ENCODE measurements at regions of chr15 and their contacts with region 1.

Region 1: GRCh38 chr15:23039151-23039916 is at the start of gene TUBGCP5:
- DNase-seq: peak; percentile 99 to 100
- ATAC-seq: peak; percentile 100
- H3K4me3 ChIP-seq: peak within 1 kb of the TSS; percentile 20 to 92
- H3K27ac ChIP-seq: peak within 1 kb of the TSS in 1 of 2 donors; percentile 59
- H3K4me1 ChIP-seq: no peaks in the 10 kb centered on the region
- H3K27me3 ChIP-seq: no peaks in the 10 kb centered on the region
- total RNA-seq, gene TUBGCP5: 13.7 to 19.8 TPM

Region 2: GRCh38 chr15:22786868-22787698 is 252.3 kb before region 1 on chr15:
- intact Hi-C with region 1: loop called in 1 of 2 experiments (anchors 10 kb)
- DNase-seq: peak in 1 of 2 donors; percentile 77
- ATAC-seq: no peak
- H3K4me3 ChIP-seq: peak overlapping the region; percentile 75
- H3K27ac ChIP-seq: peak overlapping the region in 1 of 2 donors; percentile 14
- H3K4me1 ChIP-seq: no peaks in the 10 kb centered on the region
- H3K27me3 ChIP-seq: no peaks in the 10 kb centered on the region

Region 3: DNA sequence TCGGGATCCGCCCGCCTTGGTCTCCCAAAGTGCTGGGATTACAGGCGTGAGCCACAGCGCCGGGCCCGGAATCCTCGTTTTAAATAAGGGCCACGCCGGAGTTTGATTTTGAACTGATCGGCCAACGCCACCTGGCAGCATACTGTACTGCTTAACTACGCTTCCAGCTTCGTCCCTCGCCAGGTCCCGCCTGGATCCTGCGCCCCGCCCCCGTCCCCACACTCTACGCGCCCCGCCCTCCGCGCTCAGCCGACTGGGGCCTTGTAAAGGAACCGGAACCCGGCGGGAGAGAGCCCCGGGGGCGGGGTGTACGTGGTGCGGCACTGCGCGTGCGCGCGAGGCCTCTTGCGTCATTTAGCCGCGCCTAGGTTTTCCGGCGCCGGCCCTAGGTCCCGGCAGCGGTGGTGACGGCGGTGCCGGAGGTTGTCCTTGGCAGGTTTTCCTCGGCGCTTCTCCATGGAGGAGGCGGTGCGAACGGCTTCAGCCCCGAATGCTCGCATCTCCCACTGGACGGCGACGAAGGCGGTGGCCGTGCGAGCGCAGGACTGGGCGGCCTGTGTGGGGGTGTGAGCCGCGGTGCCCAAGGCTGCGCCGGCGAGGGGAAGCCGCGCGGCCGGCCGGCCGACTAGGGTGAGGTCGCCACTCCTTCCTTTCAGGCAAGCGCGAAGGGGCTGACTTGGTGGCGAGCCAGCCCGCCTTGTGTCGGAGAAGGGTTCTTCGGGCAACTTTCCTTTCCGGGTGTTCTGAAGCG is 200.9 kb before region 1 on chr15 and contains the start of gene NIPA2:
- intact Hi-C with region 1: loop called in 1 of 2 experiments (anchors 2 kb)
- DNase-seq: peak; percentile 99 to 100
- ATAC-seq: peak; percentile 99
- H3K4me3 ChIP-seq: peak within 1 kb of the TSS; percentile 67 to 85
- H3K27ac ChIP-seq: peak within 1 kb of the TSS; percentile 63 to 83
- H3K4me1 ChIP-seq: no peaks in the 10 kb centered on the region
- H3K27me3 ChIP-seq: no peaks in the 10 kb centered on the region
- total RNA-seq, gene NIPA2: 28.3 to 30.1 TPM

Region 4: DNA sequence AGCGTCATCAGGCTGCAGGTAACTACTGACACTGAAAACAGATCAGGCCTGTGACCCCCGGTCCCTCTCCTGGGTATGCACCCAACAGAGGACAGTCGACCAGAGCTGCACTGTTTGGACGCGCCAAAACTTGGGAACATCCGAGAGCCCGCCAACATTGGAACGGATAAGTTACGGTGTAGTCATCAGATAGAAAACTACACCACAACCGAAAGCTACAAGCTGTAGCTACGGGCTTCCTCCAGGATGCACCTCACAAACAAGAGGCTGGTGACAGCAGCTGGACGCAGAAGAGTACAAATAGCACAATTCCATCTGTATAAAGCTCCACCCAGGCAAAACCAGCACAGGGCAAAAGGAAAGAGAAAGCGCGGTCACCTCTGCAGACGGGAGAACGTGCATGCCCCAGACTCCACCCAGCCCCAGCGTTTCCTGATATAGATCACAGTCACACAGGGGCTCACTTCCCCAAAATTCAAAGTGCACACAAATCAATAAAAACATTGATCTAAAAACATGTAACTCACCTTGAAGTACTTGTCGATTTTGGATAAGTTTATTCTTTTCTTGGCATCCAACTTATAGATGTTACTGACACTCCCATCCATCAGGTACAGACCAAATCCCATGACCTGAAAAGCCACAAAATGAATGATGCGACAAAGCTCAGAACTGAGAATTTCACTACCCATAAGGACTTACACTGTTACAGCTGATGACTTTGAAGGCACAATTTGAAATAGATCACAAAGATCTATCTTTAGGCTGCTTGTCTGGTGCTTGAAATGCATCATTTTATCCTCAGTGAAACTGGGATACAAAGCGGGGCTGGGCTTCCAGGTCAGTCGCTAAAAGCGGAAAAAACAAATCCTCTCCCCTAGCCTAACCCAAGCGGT is 102.5 kb before region 1 on chr15:
- intact Hi-C with region 1: loop called in 1 of 2 experiments (anchors 10 kb)
- DNase-seq: no peak
- ATAC-seq: no peak
- H3K4me3 ChIP-seq: no peak overlapping the region
- H3K27ac ChIP-seq: no peak overlapping the region
- H3K4me1 ChIP-seq: no peaks in the 10 kb centered on the region
- H3K27me3 ChIP-seq: no peaks in the 10 kb centered on the region

Region 5: GRCh38 chr15:22980189-22981050 is 58.9 kb before region 1 on chr15 and contains the start of gene CYFIP1:
- intact Hi-C with region 1: loop called (anchors 5 to 10 kb)
- DNase-seq: peak; percentile 92 to 96
- ATAC-seq: peak; percentile 96
- H3K4me3 ChIP-seq: peak within 1 kb of the TSS; percentile 94 to 97
- H3K27ac ChIP-seq: peak within 1 kb of the TSS; percentile 52 to 55
- H3K4me1 ChIP-seq: peaks cover 0 to 2% of the 10 kb centered on the region in 2 donors
- H3K27me3 ChIP-seq: no peaks in the 10 kb centered on the region
- total RNA-seq, gene CYFIP1: 160 to 172 TPM

Region 6: GRCh38 chr15:23467110-23467600 is 427.8 kb after region 1 on chr15:
- intact Hi-C with region 1: loop called in 1 of 2 experiments (anchors 5 kb)
- DNase-seq: no peak
- ATAC-seq: no peak
- H3K4me3 ChIP-seq: no peak overlapping the region
- H3K27ac ChIP-seq: no peak overlapping the region
- H3K4me1 ChIP-seq: no peaks in the 10 kb centered on the region
- H3K27me3 ChIP-seq: no peaks in the 10 kb centered on the region

Measured in aorta (tissue), 5 donors.